ENCODE measurements at regions of chr17 and their contacts with region 1.

Region 1: DNA sequence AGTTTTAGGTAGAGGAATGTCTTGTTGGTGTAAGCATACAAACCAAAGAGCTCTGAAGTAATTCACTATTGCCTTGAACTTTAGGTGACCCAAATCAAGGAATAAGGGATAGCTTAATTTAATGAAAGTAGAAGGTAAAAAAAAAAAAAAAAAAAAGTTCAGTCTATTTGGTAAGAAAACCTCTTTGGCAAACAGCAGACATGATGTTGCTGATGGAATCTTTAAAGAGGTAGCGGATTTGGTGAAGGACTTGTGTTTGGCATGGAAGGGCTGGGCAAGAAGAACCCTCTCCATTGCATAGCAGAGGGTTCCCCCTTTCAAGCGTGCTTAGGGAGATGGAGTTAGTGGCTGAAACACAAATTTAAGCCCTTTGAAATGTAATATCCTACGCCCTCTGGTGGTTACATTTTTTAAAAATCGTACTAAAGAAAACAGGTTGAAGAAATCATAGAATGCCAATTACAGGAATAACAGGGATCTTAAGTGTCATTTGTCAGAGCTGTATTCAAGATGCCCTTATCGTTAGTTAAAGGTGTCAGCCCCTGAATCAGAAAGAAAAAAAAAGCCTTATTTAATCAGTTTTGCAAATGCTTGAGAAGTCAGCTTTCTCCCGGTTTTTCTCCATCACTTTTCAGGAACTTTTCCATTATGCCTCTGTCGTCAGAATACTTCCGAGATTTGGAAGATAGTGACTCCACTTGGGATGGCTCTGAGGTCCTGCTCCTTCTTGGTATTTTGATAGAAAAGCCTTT is 383.1 kb downstream of the KCNJ2 start:
- DNase-seq: peak in 1 of 7 donors; percentile 1
- H3K4me3 ChIP-seq: no peak overlapping the region
- H3K27ac ChIP-seq: no peak overlapping the region
- H3K4me1 ChIP-seq: no peaks in the 10 kb centered on the region
- H3K27me3 ChIP-seq: no peaks in the 10 kb centered on the region
- CTCF ChIP-seq: peak; percentile 47 to 68 (median 60)
- POLR2A ChIP-seq: no peak

Region 2: GRCh38 chr17:69523244-69523861 is 1029.1 kb before region 1 on chr17:
- intact Hi-C with region 1: loop called in 1 of 2 experiments (anchors 5 kb)
- DNase-seq: peak in 6 of 7 donors; percentile 18 to 58 (median 36)
- H3K4me3 ChIP-seq: no peak overlapping the region
- H3K27ac ChIP-seq: no peak overlapping the region
- H3K4me1 ChIP-seq: no peaks in the 10 kb centered on the region
- H3K27me3 ChIP-seq: no peaks in the 10 kb centered on the region
- CTCF ChIP-seq: peak; percentile 36 to 73 (median 70)
- POLR2A ChIP-seq: no peak

Region 3: GRCh38 chr17:69574257-69575197 is 977.9 kb before region 1 on chr17:
- intact Hi-C with region 1: loop called in 1 of 2 experiments (anchors 5 kb)
- DNase-seq: peak in 3 of 7 donors; percentile 28 to 64 (median 42)
- H3K4me3 ChIP-seq: no peak overlapping the region
- H3K27ac ChIP-seq: peak overlapping the region in 3 of 5 donors; percentile 36 to 91 (median 48)
- H3K4me1 ChIP-seq: peaks cover 0 to 18% of the 10 kb centered on the region in 2 donors
- H3K27me3 ChIP-seq: no peaks in the 10 kb centered on the region
- CTCF ChIP-seq: no peak
- POLR2A ChIP-seq: no peak

Region 4: GRCh38 chr17:70521821-70522256 is 30.6 kb before region 1 on chr17:
- intact Hi-C with region 1: no loop called
- DNase-seq: peak; percentile 22 to 63 (median 56)
- H3K4me3 ChIP-seq: no peak overlapping the region
- H3K27ac ChIP-seq: no peak overlapping the region
- H3K4me1 ChIP-seq: no peaks in the 10 kb centered on the region
- H3K27me3 ChIP-seq: no peaks in the 10 kb centered on the region
- CTCF ChIP-seq: no peak
- POLR2A ChIP-seq: no peak